OCI-LY7 (cell line): ENCODE measurements at regions of chr22 and their contacts with region 1.

Region 1: DNA sequence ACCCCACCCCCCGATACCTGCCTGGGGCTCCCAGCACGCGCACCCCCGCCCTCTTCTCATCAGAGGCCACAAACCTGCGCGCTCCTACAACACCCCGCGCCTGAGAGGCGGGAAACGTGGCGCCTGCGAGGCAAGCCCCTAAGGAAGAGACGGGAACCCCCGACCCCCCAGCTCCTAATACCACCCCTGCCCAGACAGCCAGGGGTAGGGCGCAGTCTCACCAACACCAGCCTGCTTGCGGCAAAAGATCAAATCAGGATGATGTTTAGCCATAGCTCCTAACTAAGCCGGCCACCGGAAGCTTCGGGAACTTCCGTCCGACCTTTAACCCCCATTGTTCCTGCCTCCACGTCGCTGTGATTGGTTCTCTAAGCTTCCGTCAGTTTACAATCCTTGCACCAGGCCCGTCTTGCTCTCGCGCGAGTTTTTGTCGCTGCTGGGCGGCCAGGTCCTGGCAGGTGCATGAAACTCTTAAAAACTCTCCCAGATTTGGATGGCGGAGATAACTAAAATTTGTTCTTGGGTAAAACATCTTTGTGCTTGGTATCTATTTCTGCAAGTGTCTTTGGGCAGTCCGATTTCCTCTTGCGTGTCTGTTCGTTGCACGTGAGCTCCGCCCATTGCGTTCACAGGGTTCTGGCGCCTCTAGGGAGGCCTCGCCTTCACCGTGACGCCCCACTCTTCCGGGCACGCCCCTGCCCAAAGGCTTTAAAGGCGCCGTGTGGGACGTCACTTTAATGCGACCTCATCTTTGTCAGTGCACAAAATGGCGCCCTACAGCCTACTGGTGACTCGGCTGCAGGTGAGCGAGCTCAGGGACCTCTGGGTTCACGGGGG is at the starts of genes ACO2 and PHF5A:
- DNase-seq: peak; percentile 98
- H3K4me3 ChIP-seq: peak within 1 kb of the TSS; percentile 94
- H3K27ac ChIP-seq: peak within 1 kb of the TSS; percentile 76
- H3K4me1 ChIP-seq: peaks cover 36% of the 10 kb centered on the region
- CTCF ChIP-seq: no peak
- total RNA-seq, gene ACO2: 61.5 and 69.0 TPM in 2 replicates
- total RNA-seq, gene PHF5A: 87.9 and 98.8 TPM in 2 replicates

Region 2: DNA sequence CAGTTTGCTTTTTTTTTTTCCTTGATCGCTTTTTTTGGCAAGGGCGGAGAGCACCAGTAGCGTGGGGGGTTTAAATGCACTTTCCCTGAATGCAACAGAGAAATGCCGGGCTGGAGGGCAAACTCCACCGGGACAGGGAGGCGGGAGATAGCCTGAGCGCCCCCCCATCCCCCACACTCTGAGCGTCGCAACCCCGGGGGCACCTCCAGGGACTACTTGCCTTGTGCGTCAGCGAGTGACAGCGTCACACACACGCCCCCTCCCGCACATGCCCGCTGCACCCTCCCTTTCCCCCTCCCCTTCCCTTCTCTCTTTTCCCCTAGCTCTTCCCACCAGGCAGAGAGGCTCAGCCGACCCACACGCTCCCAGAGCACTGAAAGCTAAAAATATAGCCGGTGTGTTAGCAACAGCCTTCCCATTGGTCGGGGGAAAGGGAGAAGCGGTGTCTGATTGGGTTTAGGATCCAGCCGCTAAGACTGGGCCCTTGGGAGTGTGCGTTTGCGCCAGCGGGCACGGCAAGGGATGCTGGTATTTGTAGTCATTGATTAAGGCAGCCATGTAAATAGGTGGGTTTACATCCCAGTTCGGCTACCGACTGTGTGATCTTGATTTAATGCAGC is 20.3 kb before region 1 on chr22:
- CTCF ChIA-PET with region 1: no interaction called
- POLR2A ChIA-PET with region 1: interaction called, 12 read pairs
- intact Hi-C with region 1: loop called (anchors 2 kb)
- DNase-seq: peak; percentile 97
- H3K4me3 ChIP-seq: peak overlapping the region; percentile 83
- H3K27ac ChIP-seq: peak overlapping the region; percentile 85
- H3K4me1 ChIP-seq: peaks cover 14% of the 10 kb centered on the region
- CTCF ChIP-seq: no peak

Region 3: GRCh38 chr22:41458161-41458728 is 10.4 kb before region 1 on chr22:
- CTCF ChIA-PET with region 1: no interaction called
- POLR2A ChIA-PET with region 1: interaction called, 10 read pairs
- intact Hi-C with region 1: no loop called
- DNase-seq: no peak
- H3K4me3 ChIP-seq: no peak overlapping the region
- H3K27ac ChIP-seq: no peak overlapping the region
- H3K4me1 ChIP-seq: no peaks in the 10 kb centered on the region
- CTCF ChIP-seq: no peak

Region 4: DNA sequence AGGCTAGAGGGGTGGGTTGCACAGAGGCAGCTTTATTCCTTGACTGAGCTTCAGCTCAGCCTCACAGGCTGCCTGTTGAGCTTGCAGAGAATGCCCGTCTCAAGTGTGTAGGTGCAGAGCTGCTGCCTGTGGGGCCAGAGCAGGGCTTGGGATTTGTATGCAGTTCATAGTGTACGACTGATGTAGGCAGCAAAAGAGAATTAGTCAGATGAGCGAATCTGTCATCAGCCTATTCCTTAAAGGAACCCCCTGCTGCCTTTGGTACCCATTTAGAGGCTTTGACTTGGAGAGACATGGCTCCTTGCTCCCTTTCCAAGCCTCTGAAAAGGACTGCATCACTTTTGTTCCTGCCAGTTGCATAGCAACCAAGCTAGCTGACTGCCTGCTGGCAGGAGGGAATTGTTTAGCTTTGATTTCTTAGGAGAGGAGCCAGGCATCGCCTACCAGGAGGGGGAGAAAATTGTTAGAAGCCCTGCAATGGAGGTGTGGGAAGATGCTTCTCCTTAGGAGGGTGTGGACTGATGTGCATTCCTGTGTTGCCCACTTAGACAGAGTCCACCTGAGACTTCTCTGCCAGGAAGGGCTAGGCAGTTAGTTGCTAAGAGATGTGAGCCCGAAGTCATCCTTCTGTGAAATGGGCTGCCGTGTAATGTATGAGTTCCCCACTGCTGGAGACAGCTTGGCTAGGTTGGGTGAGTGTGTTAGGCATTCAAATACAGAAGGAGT is 11.2 kb after region 1 on chr22:
- CTCF ChIA-PET with region 1: no interaction called
- POLR2A ChIA-PET with region 1: interaction called, 10 read pairs
- intact Hi-C with region 1: no loop called
- DNase-seq: no peak
- H3K4me3 ChIP-seq: no peak overlapping the region
- H3K27ac ChIP-seq: no peak overlapping the region
- H3K4me1 ChIP-seq: peaks cover 47% of the 10 kb centered on the region
- CTCF ChIP-seq: no peak